ENCODE measurements at regions of chr16 and their contacts with region 1.

Region 1: DNA sequence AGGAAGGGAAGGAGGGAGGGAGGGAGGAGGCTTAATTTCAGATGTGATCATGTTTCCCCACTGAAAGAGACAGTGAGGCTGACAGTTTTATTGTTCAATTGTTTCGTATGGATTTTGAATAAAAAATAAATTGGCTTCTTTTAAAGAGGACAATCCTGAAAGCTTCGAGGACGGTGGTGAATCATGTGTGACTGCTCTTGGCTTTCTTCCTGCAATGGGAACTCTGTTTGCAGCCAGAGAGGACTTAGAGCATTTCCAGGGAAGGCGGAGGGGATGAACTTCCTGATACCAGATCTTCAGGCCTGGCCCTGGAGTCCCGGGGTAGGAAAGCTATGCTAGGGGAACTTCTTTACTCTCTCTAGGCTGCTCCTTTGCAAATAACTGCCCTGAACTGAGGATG is 72.8 kb upstream of the C16orf82 start:
- DNase-seq: no peak
- ATAC-seq: no peak
- H3K4me3 ChIP-seq: no peak overlapping the region
- H3K27ac ChIP-seq: no peak overlapping the region
- H3K4me1 ChIP-seq: no peaks in the 10 kb centered on the region
- H3K27me3 ChIP-seq: peaks cover 0 to 16% of the 10 kb centered on the region in 2 experiments; a peak in 4 of 5 replicates
- CTCF ChIP-seq: no peak
- EP300 ChIP-seq: no peak
- POLR2A ChIP-seq: no peak
- RAD21 ChIP-seq: no peak

Region 2: DNA sequence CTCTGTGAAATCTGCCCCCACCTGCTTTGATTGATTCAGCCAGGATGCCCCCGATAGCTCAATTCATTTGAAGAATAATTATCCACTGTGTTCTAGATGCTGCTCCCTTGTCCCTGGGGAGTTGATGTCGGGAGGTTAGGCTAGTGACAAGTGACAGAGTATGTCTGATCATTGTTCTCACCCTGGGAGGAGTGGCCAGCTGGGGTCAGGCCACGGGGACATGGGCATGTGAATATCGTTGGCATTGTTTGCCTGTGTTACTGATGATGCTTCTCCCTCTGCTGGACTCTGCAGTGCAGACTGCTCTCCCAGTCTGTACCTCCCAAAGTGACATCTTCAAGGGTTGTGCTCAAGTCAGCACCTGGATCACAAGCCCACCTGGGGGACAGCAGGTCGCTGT is 17.1 kb before region 1 on chr16:
- CTCF ChIA-PET with region 1: no interaction called
- POLR2A ChIA-PET with region 1: no interaction called
- in situ Hi-C with region 1: no loop called
- intact Hi-C with region 1: no loop called
- DNase-seq: no peak
- ATAC-seq: no peak
- H3K4me3 ChIP-seq: no peak overlapping the region
- H3K27ac ChIP-seq: no peak overlapping the region
- H3K4me1 ChIP-seq: no peaks in the 10 kb centered on the region
- H3K27me3 ChIP-seq: peaks cover 0 to 5% of the 10 kb centered on the region in 2 experiments; a peak in 2 of 5 replicates
- CTCF ChIP-seq: no peak
- EP300 ChIP-seq: no peak
- POLR2A ChIP-seq: no peak
- RAD21 ChIP-seq: no peak

Region 3: DNA sequence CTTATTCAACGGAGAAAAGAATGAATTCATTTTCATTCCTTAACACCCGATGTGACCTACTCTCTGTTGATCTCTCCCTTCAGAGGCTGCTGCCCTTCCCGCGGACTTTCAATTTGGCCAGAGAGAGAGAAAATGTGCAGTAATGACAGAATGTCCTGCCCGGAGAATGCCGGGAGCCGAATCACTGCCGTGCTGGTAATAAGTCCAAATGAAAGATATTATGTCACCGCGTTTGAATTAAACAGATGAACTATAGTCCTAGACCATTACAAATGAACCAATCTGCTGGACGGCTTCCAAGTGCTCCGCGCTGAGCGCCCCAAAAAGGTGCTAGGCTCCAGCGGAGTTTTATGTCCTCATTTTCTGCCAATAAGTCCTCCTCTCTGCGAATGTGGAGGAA is 58.0 kb after region 1 on chr16:
- CTCF ChIA-PET with region 1: no interaction called
- POLR2A ChIA-PET with region 1: no interaction called
- in situ Hi-C with region 1: no loop called
- intact Hi-C with region 1: loop called (anchors 10 kb)
- DNase-seq: no peak
- ATAC-seq: no peak
- H3K4me3 ChIP-seq: no peak overlapping the region
- H3K27ac ChIP-seq: no peak overlapping the region
- H3K4me1 ChIP-seq: no peaks in the 10 kb centered on the region
- H3K27me3 ChIP-seq: peaks cover 7 to 31% of the 10 kb centered on the region in 2 experiments; a peak in 3 of 5 replicates
- CTCF ChIP-seq: no peak
- EP300 ChIP-seq: no peak
- POLR2A ChIP-seq: no peak
- RAD21 ChIP-seq: no peak

Region 4: GRCh38 chr16:27179500-27180072 is 185.6 kb after region 1 on chr16:
- CTCF ChIA-PET with region 1: no interaction called
- POLR2A ChIA-PET with region 1: no interaction called
- in situ Hi-C with region 1: no loop called
- intact Hi-C with region 1: no loop called
- DNase-seq: peak; percentile 85 to 87 (median 86)
- ATAC-seq: peak; percentile 96
- H3K4me3 ChIP-seq: no peak overlapping the region
- H3K27ac ChIP-seq: no peak overlapping the region
- H3K4me1 ChIP-seq: no peaks in the 10 kb centered on the region; a peak in 1 of 5 replicates
- H3K27me3 ChIP-seq: peaks cover 0 to 4% of the 10 kb centered on the region in 2 experiments; a peak in 1 of 5 replicates
- CTCF ChIP-seq: peak; percentile 97 to 99 (median 99)
- EP300 ChIP-seq: no peak
- POLR2A ChIP-seq: no peak
- RAD21 ChIP-seq: peak; percentile 84 to 95

Region 5: GRCh38 chr16:27625050-27625697 is 631.2 kb after region 1 on chr16:
- CTCF ChIA-PET with region 1: no interaction called
- POLR2A ChIA-PET with region 1: no interaction called
- in situ Hi-C with region 1: no loop called
- intact Hi-C with region 1: no loop called
- DNase-seq: no peak
- ATAC-seq: no peak
- H3K4me3 ChIP-seq: no peak overlapping the region
- H3K27ac ChIP-seq: no peak overlapping the region
- H3K4me1 ChIP-seq: no peaks in the 10 kb centered on the region; a peak in 1 of 5 replicates
- H3K27me3 ChIP-seq: no peaks in the 10 kb centered on the region
- CTCF ChIP-seq: no peak
- EP300 ChIP-seq: no peak
- POLR2A ChIP-seq: no peak
- RAD21 ChIP-seq: no peak